Panc1 (cell line): ENCODE measurements at regions of chr11 and their contacts with region 1.

Region 1: GRCh38 chr11:62370743-62371440 is 33.6 kb downstream of the ASRGL1 start:
- DNase-seq: no peak
- ATAC-seq: no peak
- H3K4me3 ChIP-seq: no peak overlapping the region
- H3K27ac ChIP-seq: no peak overlapping the region
- H3K4me1 ChIP-seq: no peaks in the 10 kb centered on the region
- H3K27me3 ChIP-seq: no peaks in the 10 kb centered on the region
- CTCF ChIP-seq: no peak

Region 2: DNA sequence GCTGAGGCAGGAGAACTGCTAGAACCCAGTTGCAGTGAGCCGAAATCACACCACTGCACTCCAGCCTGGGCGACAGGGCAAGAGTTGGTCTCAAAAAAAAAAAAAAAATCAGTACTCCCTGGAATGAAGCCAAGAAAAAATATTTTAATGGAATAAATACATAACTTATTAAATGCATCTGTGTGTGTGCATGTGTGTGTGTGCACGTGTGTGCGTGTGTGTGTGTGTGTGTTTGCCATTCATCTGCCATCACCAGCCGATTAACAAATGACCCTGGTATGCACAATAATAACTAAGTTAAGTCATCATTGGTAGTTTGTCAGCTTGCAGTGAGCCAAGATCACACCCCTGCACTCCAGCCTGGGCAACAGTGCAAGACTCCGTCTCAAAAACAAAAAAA is 12.9 kb after region 1 on chr11:
- CTCF ChIA-PET with region 1: interaction called, 4 read pairs
- POLR2A ChIA-PET with region 1: interaction called, 10 read pairs
- in situ Hi-C with region 1: no loop called
- intact Hi-C with region 1: no loop called
- DNase-seq: no peak
- ATAC-seq: no peak
- H3K4me3 ChIP-seq: no peak overlapping the region
- H3K27ac ChIP-seq: no peak overlapping the region
- H3K4me1 ChIP-seq: peaks cover 15% of the 10 kb centered on the region
- H3K27me3 ChIP-seq: no peaks in the 10 kb centered on the region
- CTCF ChIP-seq: no peak

Region 3: DNA sequence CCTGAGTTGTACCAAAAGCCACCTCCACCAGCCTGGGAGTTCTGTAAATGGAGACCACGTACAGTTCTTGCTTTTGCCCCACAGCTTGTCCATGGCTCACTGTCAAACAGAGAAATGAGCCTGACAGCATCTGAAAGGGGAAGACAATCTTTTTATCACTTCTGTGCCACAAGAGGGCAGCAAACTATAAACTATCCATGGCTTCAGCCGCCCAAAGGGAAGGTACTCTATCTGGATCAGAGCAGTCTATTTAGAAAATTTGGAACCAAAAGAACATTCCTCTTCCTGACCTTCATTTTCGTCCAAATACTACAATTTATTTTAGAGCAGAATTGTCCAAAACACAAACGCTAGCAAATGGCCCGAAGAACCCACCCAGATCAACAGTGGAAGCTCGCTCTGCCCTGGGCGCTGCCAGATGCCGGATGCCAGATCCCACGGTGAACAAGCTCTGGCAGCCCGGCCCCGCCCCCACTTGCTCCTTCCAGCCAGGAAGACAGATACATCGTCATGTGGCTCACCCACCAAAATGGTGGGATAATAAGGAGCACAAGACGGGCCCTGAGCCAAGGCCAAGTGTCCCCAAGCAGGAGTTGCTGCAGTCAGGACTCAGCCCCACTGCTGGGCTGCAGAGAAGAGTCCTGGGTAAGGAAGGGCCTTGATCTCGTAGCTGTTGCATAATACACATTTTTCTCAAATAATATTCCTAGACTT is 24.1 kb after region 1 on chr11:
- CTCF ChIA-PET with region 1: interaction called, 10 read pairs
- POLR2A ChIA-PET with region 1: no interaction called
- in situ Hi-C with region 1: no loop called
- intact Hi-C with region 1: no loop called
- DNase-seq: no peak
- ATAC-seq: peak; percentile 94
- H3K4me3 ChIP-seq: no peak overlapping the region; a peak in 1 of 4 replicates
- H3K27ac ChIP-seq: peak overlapping the region; percentile 77
- H3K4me1 ChIP-seq: peaks cover 41% of the 10 kb centered on the region
- H3K27me3 ChIP-seq: no peaks in the 10 kb centered on the region
- CTCF ChIP-seq: peak; percentile 75; the same call in 1 of the 2 replicates

Region 4: GRCh38 chr11:62621567-62622470 is 250.9 kb after region 1 on chr11 and contains the start of gene B3GAT3:
- CTCF ChIA-PET with region 1: no interaction called
- POLR2A ChIA-PET with region 1: no interaction called
- in situ Hi-C with region 1: no loop called
- intact Hi-C with region 1: no loop called
- DNase-seq: peak; percentile 85
- ATAC-seq: peak; percentile 99
- H3K4me3 ChIP-seq: peak within 1 kb of the TSS; percentile 81 to 94
- H3K27ac ChIP-seq: peak within 1 kb of the TSS; percentile 98
- H3K4me1 ChIP-seq: peaks cover 14% of the 10 kb centered on the region
- H3K27me3 ChIP-seq: no peaks in the 10 kb centered on the region
- CTCF ChIP-seq: no peak
- total RNA-seq, gene B3GAT3: 68.2 TPM